ENCODE measurements at regions of chr2 and their contacts with region 1.

Region 1: DNA sequence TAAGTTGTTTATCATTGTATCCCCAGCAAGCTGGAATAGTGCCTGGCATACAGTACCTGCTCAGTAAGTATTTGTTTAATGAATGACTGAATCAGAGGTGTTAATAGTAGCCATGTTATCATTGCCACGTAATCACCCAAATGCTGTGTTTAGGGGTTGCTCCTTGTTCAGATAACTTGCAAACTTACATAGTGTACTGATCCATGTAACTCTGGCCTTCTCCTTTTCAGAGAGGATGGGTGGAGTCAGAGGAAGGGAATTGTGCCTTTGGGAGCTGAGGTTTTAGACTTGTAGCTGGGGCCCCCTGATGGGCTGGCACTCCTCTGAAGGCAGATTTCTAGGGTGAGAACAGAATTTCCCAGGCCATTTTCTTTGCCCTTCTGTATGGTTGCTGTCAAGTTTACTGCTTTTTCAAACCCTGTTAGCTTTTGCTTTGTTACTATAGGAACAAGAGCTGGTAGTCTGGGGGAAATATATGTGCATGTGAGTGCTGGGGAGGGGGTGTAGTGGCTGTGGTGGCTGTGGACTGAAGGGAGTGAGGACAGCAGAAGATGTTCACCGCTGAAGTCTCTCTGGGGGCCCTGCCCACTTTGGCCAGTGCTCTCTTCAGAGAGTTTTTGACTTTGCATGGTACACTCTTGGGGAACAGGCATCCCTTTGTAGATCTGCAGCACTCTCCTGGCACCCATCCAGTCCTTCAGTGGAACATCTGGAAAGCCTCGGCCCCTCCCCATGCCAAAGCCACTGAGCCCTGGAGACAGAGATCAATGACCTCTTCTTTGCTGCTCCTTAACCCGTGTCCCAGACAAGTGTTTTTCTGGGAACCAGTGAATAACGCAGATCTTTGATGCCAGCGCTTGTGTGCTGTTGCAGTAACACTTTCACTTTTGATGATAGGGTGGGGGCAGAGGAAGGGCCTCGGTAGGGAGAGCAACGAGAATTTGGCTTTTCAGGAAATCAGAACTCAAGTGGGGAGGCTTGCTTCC is 209.0 kb downstream of the PRKCE start:
- DNase-seq: peak in 7 of 14 experiments; percentile 4 to 48 (median 28)
- ATAC-seq: peak; percentile 73
- H3K4me3 ChIP-seq: peak overlapping the region; percentile 52
- H3K4me3 Mint-ChIP-seq: peak overlapping the region; percentile 88
- H3K27ac ChIP-seq: peak overlapping the region in 1 of 2 donors; percentile 14
- H3K27ac Mint-ChIP-seq: peak overlapping the region; percentile 81
- H3K4me1 ChIP-seq: peaks cover 20% of the 10 kb centered on the region
- H3K4me1 Mint-ChIP-seq: peaks cover 45% of the 10 kb centered on the region
- H3K27me3 ChIP-seq: no peaks in the 10 kb centered on the region
- H3K27me3 Mint-ChIP-seq: no peaks in the 10 kb centered on the region
- CTCF ChIP-seq: no peak

Region 2: GRCh38 chr2:45743531-45744396 is 116.7 kb before region 1 on chr2:
- CTCF ChIA-PET with region 1: no interaction called
- POLR2A ChIA-PET with region 1: no interaction called
- intact Hi-C with region 1: no loop called
- DNase-seq: no peak
- ATAC-seq: no peak
- H3K4me3 ChIP-seq: no peak overlapping the region
- H3K4me3 Mint-ChIP-seq: no peak overlapping the region
- H3K27ac ChIP-seq: no peak overlapping the region
- H3K27ac Mint-ChIP-seq: no peak overlapping the region
- H3K4me1 ChIP-seq: no peaks in the 10 kb centered on the region
- H3K4me1 Mint-ChIP-seq: peaks cover 5% of the 10 kb centered on the region
- H3K27me3 ChIP-seq: no peaks in the 10 kb centered on the region
- H3K27me3 Mint-ChIP-seq: no peaks in the 10 kb centered on the region
- CTCF ChIP-seq: no peak

Region 3: GRCh38 chr2:45794134-45794617 is 66.3 kb before region 1 on chr2:
- CTCF ChIA-PET with region 1: no interaction called
- POLR2A ChIA-PET with region 1: no interaction called
- intact Hi-C with region 1: no loop called
- DNase-seq: no peak
- ATAC-seq: no peak
- H3K4me3 ChIP-seq: no peak overlapping the region
- H3K4me3 Mint-ChIP-seq: no peak overlapping the region
- H3K27ac ChIP-seq: no peak overlapping the region
- H3K27ac Mint-ChIP-seq: no peak overlapping the region
- H3K4me1 ChIP-seq: no peaks in the 10 kb centered on the region
- H3K4me1 Mint-ChIP-seq: no peaks in the 10 kb centered on the region
- H3K27me3 ChIP-seq: no peaks in the 10 kb centered on the region
- H3K27me3 Mint-ChIP-seq: no peaks in the 10 kb centered on the region
- CTCF ChIP-seq: no peak

Region 4: GRCh38 chr2:45821564-45822271 is 38.7 kb before region 1 on chr2:
- CTCF ChIA-PET with region 1: no interaction called
- POLR2A ChIA-PET with region 1: no interaction called
- intact Hi-C with region 1: no loop called
- DNase-seq: no peak
- ATAC-seq: no peak
- H3K4me3 ChIP-seq: no peak overlapping the region
- H3K4me3 Mint-ChIP-seq: no peak overlapping the region
- H3K27ac ChIP-seq: no peak overlapping the region
- H3K27ac Mint-ChIP-seq: no peak overlapping the region
- H3K4me1 ChIP-seq: no peaks in the 10 kb centered on the region
- H3K4me1 Mint-ChIP-seq: peaks cover 18% of the 10 kb centered on the region
- H3K27me3 ChIP-seq: no peaks in the 10 kb centered on the region
- H3K27me3 Mint-ChIP-seq: no peaks in the 10 kb centered on the region
- CTCF ChIP-seq: no peak

Region 5: DNA sequence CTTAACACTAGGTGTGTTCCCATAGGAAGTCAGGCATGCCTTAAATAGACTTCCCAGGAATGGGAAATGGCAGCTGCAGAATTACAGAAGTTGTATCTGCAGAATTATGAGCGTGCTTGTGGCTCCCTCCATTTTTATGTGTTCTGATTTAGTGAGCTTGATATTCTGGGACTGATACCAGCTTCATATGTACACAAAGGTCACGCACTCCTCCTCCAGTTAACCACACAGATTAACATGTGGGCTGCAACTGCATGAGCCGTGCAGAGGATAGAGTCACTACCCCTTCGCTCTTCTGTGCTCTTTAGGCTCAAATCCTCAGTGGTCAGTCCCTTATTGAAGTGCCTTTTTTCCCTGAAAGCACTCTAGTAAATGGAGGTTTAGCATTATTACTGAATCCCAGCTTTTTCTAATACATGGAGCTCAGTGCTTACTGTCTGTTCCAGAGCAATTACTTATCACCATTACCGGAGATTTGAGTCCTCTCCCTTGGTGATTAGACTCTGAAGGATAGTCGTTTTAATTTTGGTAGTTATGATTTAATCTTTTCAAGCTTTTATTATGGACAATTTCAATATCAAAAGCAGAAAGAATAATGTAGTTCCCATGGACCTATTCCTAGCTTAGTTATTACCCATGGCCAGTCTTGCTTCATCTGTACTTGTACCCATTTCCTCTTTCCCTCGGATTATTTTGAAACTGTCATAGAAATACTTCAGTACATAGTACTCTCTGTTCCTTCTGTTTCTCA is 29.4 kb after region 1 on chr2:
- CTCF ChIA-PET with region 1: no interaction called
- POLR2A ChIA-PET with region 1: interaction called, 5 read pairs
- intact Hi-C with region 1: loop called in 1 of 2 experiments (anchors 2 kb)
- DNase-seq: peak in 2 of 14 experiments; percentile 23 to 25
- ATAC-seq: no peak
- H3K4me3 ChIP-seq: no peak overlapping the region
- H3K4me3 Mint-ChIP-seq: no peak overlapping the region
- H3K27ac ChIP-seq: no peak overlapping the region
- H3K27ac Mint-ChIP-seq: peak overlapping the region; percentile 71
- H3K4me1 ChIP-seq: peaks cover 33% of the 10 kb centered on the region
- H3K4me1 Mint-ChIP-seq: peaks cover 61% of the 10 kb centered on the region
- H3K27me3 ChIP-seq: no peaks in the 10 kb centered on the region
- H3K27me3 Mint-ChIP-seq: no peaks in the 10 kb centered on the region
- CTCF ChIP-seq: no peak